ENCODE measurements at regions of chr3 and their contacts with region 1.

Region 1: GRCh38 chr3:71444028-71444860 is 139.3 kb downstream of the FOXP1 start:
- DNase-seq: peak; percentile 57 to 97 (median 94)
- ATAC-seq: peak; percentile 88
- H3K4me3 ChIP-seq: peak overlapping the region; percentile 12
- H3K4me3 Mint-ChIP-seq: peak overlapping the region; percentile 64 to 86 (median 77)
- H3K27ac ChIP-seq: peak overlapping the region; percentile 90
- H3K27ac Mint-ChIP-seq: peak overlapping the region; percentile 94 to 100 (median 99)
- H3K4me1 ChIP-seq: peaks cover 93 to 96% of the 10 kb centered on the region in 2 donors
- H3K4me1 Mint-ChIP-seq: peaks cover 70 to 100% (median 96%) of the 10 kb centered on the region in 7 donors
- H3K27me3 ChIP-seq: no peaks in the 10 kb centered on the region
- H3K27me3 Mint-ChIP-seq: peaks cover 0 to 2% (median 0%) of the 10 kb centered on the region in 5 donors

Region 2: DNA sequence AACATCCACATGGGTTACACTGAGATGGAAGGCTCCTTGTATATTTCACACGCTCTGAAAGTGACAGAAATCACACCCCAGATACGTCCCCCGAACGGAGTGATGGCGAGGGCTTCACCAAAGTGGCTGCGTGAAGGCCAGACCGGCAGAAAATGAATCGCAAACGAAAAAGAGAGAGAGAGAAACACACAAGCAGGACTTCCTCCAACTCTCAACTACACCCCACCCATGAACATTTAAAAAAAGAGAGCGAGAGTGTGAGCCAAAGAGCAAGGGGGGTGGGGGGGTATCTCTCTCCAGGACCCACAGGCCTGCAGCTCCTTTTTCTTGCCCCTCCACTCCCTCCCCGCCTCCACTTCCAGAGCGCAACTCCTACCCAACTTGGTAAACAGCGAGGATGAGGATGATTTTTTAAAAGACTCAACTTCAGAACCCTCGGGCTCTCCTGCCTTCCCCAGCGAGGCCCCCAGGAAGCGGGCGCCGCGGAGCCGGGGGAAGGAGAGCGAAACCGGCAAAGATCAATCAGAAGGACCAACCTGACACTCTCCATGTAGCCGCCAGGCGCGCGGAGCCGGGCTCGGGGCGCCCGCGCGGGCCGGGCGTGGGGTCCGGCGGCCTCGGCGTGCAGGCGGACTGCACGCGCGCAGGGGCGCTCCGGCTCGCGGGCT is 379.8 kb before region 1 on chr3:
- CTCF ChIA-PET with region 1: no interaction called
- POLR2A ChIA-PET with region 1: interaction called, 5 read pairs
- intact Hi-C with region 1: loop called (anchors 2 to 5 kb)
- DNase-seq: peak in 8 of 9 donors; percentile 35 to 86 (median 84)
- ATAC-seq: peak; percentile 64
- H3K4me3 ChIP-seq: peak overlapping the region; percentile 74
- H3K4me3 Mint-ChIP-seq: no peak overlapping the region
- H3K27ac ChIP-seq: peak overlapping the region; percentile 82
- H3K27ac Mint-ChIP-seq: no peak overlapping the region
- H3K4me1 ChIP-seq: peaks cover 55 to 64% of the 10 kb centered on the region in 2 donors
- H3K4me1 Mint-ChIP-seq: peaks cover 47 to 69% (median 67%) of the 10 kb centered on the region in 7 donors
- H3K27me3 ChIP-seq: no peaks in the 10 kb centered on the region
- H3K27me3 Mint-ChIP-seq: no peaks in the 10 kb centered on the region

Region 3: GRCh38 chr3:71369701-71370391 is 74.4 kb before region 1 on chr3:
- CTCF ChIA-PET with region 1: interaction called, 5 read pairs
- POLR2A ChIA-PET with region 1: interaction called, 4 read pairs
- intact Hi-C with region 1: loop called in 1 of 2 experiments (anchors 1 kb)
- DNase-seq: no peak
- ATAC-seq: no peak
- H3K4me3 ChIP-seq: no peak overlapping the region
- H3K4me3 Mint-ChIP-seq: peak overlapping the region in 2 of 10 donors; percentile 12 to 73
- H3K27ac ChIP-seq: peak overlapping the region; percentile 88
- H3K27ac Mint-ChIP-seq: peak overlapping the region in 8 of 9 donors; percentile 88 to 100 (median 96)
- H3K4me1 ChIP-seq: peaks cover 19 to 78% of the 10 kb centered on the region in 2 donors
- H3K4me1 Mint-ChIP-seq: peaks cover 10 to 94% (median 89%) of the 10 kb centered on the region in 7 donors
- H3K27me3 ChIP-seq: no peaks in the 10 kb centered on the region
- H3K27me3 Mint-ChIP-seq: peaks cover 0 to 39% (median 0%) of the 10 kb centered on the region in 5 donors

Region 4: DNA sequence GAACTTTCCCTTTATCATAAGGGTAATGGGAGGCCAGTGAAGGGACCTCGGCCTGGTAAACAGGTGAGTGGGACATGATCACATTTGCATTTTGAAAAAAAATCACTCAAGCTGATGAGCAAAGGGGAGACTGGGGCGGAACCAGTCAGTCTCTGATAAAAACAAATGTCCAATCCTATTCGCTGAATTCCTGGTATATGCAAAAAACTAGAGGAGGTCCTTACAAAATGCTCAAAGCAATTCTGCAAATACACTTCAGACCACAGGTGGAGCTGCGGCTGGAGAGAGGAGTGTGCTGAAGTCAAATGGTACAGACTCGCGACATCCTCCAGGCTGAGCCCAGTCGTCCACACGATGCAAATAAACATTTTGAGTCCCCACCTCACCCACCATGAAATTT is 27.4 kb before region 1 on chr3:
- CTCF ChIA-PET with region 1: interaction called, 7 read pairs
- POLR2A ChIA-PET with region 1: interaction called, 356 read pairs
- intact Hi-C with region 1: loop called (anchors 1 kb)
- DNase-seq: peak in 7 of 9 donors; percentile 56 to 72 (median 65)
- ATAC-seq: peak; percentile 69
- H3K4me3 ChIP-seq: peak overlapping the region; percentile 20
- H3K4me3 Mint-ChIP-seq: peak overlapping the region in 9 of 10 donors; percentile 40 to 82 (median 69)
- H3K27ac ChIP-seq: peak overlapping the region; percentile 67
- H3K27ac Mint-ChIP-seq: peak overlapping the region in 8 of 9 donors; percentile 87 to 99 (median 94)
- H3K4me1 ChIP-seq: peaks cover 54 to 87% of the 10 kb centered on the region in 2 donors
- H3K4me1 Mint-ChIP-seq: peaks cover 41 to 99% (median 96%) of the 10 kb centered on the region in 7 donors
- H3K27me3 ChIP-seq: no peaks in the 10 kb centered on the region
- H3K27me3 Mint-ChIP-seq: peaks cover 0 to 44% (median 0%) of the 10 kb centered on the region in 5 donors

Region 5: GRCh38 chr3:71456156-71456555 is 11.9 kb after region 1 on chr3:
- CTCF ChIA-PET with region 1: interaction called, 18 read pairs
- POLR2A ChIA-PET with region 1: interaction called, 131 read pairs
- intact Hi-C with region 1: loop called (anchors 1 kb)
- DNase-seq: peak in 5 of 9 donors; percentile 41 to 65 (median 57)
- ATAC-seq: peak; percentile 59
- H3K4me3 ChIP-seq: peak overlapping the region; percentile 23
- H3K4me3 Mint-ChIP-seq: peak overlapping the region; percentile 75 to 90 (median 78)
- H3K27ac ChIP-seq: peak overlapping the region; percentile 90
- H3K27ac Mint-ChIP-seq: peak overlapping the region; percentile 90 to 99 (median 97)
- H3K4me1 ChIP-seq: peaks cover 72 to 84% of the 10 kb centered on the region in 2 donors
- H3K4me1 Mint-ChIP-seq: peaks cover 56 to 100% (median 92%) of the 10 kb centered on the region in 7 donors
- H3K27me3 ChIP-seq: no peaks in the 10 kb centered on the region
- H3K27me3 Mint-ChIP-seq: peaks cover 0 to 13% (median 0%) of the 10 kb centered on the region in 5 donors